CD4-positive, alpha-beta T cell (primary cell): ENCODE measurements at regions of chr14 and their contacts with region 1.

Region 1: GRCh38 chr14:49497725-49498348 is 88.3 kb downstream of the RPS29 start:
- DNase-seq: peak in 4 of 14 experiments; percentile 21 to 72 (median 64)
- ATAC-seq: peak; percentile 84
- H3K4me3 ChIP-seq: no peak overlapping the region
- H3K4me3 Mint-ChIP-seq: no peak overlapping the region
- H3K27ac ChIP-seq: no peak overlapping the region
- H3K27ac Mint-ChIP-seq: no peak overlapping the region
- H3K4me1 ChIP-seq: no peaks in the 10 kb centered on the region
- H3K4me1 Mint-ChIP-seq: no peaks in the 10 kb centered on the region
- H3K27me3 ChIP-seq: peaks cover 7 to 13% of the 10 kb centered on the region in 2 experiments
- H3K27me3 Mint-ChIP-seq: peaks cover 27% of the 10 kb centered on the region
- CTCF ChIP-seq: peak; percentile 88

Region 2: GRCh38 chr14:49461529-49462401 is 36.1 kb before region 1 on chr14:
- CTCF ChIA-PET with region 1: interaction called, 16 read pairs
- POLR2A ChIA-PET with region 1: interaction called, 3 read pairs
- intact Hi-C with region 1: loop called in 1 of 2 experiments (anchors 2 kb)
- DNase-seq: peak in 13 of 14 experiments; percentile 4 to 86 (median 46)
- ATAC-seq: peak; percentile 97
- H3K4me3 ChIP-seq: no peak overlapping the region
- H3K4me3 Mint-ChIP-seq: no peak overlapping the region
- H3K27ac ChIP-seq: no peak overlapping the region
- H3K27ac Mint-ChIP-seq: no peak overlapping the region
- H3K4me1 ChIP-seq: no peaks in the 10 kb centered on the region
- H3K4me1 Mint-ChIP-seq: no peaks in the 10 kb centered on the region
- H3K27me3 ChIP-seq: no peaks in the 10 kb centered on the region
- H3K27me3 Mint-ChIP-seq: peaks cover 2% of the 10 kb centered on the region
- CTCF ChIP-seq: peak; percentile 73

Region 3: GRCh38 chr14:49528049-49528448 is 30.2 kb after region 1 on chr14:
- CTCF ChIA-PET with region 1: no interaction called
- POLR2A ChIA-PET with region 1: no interaction called
- intact Hi-C with region 1: no loop called
- DNase-seq: no peak
- ATAC-seq: no peak
- H3K4me3 ChIP-seq: no peak overlapping the region
- H3K4me3 Mint-ChIP-seq: no peak overlapping the region
- H3K27ac ChIP-seq: no peak overlapping the region
- H3K27ac Mint-ChIP-seq: no peak overlapping the region
- H3K4me1 ChIP-seq: no peaks in the 10 kb centered on the region
- H3K4me1 Mint-ChIP-seq: no peaks in the 10 kb centered on the region
- H3K27me3 ChIP-seq: no peaks in the 10 kb centered on the region
- H3K27me3 Mint-ChIP-seq: peaks cover 20% of the 10 kb centered on the region
- CTCF ChIP-seq: no peak